ENCODE measurements at regions of chr15 and their contacts with region 1.

Region 1: GRCh38 chr15:84928843-84929168 is 44.3 kb downstream of the SLC28A1 start:
- DNase-seq: no peak
- ATAC-seq: no peak
- H3K4me3 ChIP-seq: no peak overlapping the region
- H3K4me3 Mint-ChIP-seq: no peak overlapping the region
- H3K27ac ChIP-seq: no peak overlapping the region
- H3K27ac Mint-ChIP-seq: no peak overlapping the region
- H3K4me1 ChIP-seq: no peaks in the 10 kb centered on the region
- H3K4me1 Mint-ChIP-seq: peaks cover 4 to 10% of the 10 kb centered on the region in 2 donors
- H3K27me3 ChIP-seq: no peaks in the 10 kb centered on the region
- H3K27me3 Mint-ChIP-seq: peaks cover 0 to 3% of the 10 kb centered on the region in 2 donors
- CTCF ChIP-seq: no peak

Region 2: DNA sequence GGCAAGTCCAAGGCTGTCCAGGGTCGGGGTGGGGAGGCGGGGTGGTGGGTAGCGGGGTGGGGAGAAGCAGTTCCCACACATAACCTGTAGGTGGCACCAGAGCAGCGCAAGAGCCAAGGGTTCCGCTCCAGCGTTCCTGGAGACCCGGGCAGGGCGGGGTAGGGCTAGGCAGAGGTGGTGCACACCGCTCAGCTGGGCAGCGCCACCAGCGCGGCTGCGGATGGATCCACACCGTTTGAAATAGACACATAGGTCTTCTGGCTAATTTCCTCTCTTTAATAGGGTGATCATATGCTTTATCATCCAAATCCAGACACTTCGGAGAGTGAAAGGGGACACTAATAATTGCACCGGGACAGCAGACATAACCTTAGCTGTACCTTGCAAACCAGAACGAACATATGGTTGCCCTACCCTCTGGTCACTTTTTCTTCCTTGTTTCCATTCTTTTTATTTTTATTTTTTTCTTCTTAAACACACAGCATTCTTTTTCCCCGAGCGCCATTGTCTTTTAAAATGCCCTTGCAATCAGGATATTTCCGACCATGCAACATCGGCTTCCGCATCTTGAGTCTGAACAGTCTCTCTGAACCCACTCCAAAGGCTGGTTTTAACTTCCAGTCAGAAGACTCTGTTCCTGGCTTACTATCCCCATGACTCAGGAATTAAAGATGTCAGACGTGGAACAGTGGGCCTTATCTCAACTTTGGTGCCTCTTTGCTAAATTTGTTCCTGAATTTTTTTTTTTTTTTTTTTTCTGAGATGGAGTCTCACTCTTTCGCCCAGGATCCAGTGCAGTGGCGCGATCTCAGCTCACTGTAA is 340.5 kb before region 1 on chr15:
- intact Hi-C with region 1: loop called (anchors 1 kb)
- DNase-seq: peak; percentile 71 to 92
- ATAC-seq: peak; percentile 100
- H3K4me3 ChIP-seq: no peak overlapping the region
- H3K4me3 Mint-ChIP-seq: peak overlapping the region; percentile 74
- H3K27ac ChIP-seq: no peak overlapping the region
- H3K27ac Mint-ChIP-seq: no peak overlapping the region
- H3K4me1 ChIP-seq: peaks cover 6% of the 10 kb centered on the region
- H3K4me1 Mint-ChIP-seq: peaks cover 0 to 12% of the 10 kb centered on the region in 2 donors
- H3K27me3 ChIP-seq: no peaks in the 10 kb centered on the region
- H3K27me3 Mint-ChIP-seq: peaks cover 0 to 11% of the 10 kb centered on the region in 2 donors
- CTCF ChIP-seq: peak; percentile 87

Region 3: DNA sequence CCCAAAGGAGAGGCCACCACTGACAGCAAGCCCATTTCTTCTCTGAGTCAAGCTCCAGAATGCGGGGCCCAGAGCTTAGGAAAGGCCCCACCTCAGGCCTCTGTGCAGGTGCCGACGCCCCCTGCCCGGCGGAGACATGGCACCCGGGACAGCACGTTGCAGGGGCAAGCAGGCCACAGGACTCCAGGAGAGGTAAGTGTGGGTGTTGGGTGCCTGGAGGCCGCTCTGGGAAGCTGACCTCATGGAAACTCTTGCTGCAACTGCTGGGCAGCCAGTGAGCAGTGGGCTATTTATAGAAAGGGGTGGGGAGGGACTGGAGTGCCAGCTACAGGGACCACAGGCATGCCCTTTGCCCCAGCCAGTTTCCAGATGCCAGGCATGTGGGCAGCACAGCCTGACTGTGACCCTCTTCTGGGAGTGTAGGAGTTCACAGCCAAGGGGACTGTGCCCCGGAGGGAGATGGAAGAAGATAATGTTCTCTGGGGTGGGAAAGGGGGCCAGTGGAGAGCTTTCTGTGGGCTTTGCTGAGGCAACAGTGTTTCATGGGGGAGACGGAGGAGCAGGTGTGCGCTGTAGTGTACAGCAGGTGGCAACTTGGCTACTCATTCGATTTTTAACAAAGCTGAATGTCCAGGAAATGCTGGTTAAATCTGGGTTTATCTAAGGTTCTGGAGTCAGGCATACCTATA is 87.9 kb before region 1 on chr15:
- intact Hi-C with region 1: loop called (anchors 1 kb)
- DNase-seq: no peak
- ATAC-seq: no peak
- H3K4me3 ChIP-seq: no peak overlapping the region
- H3K4me3 Mint-ChIP-seq: no peak overlapping the region
- H3K27ac ChIP-seq: no peak overlapping the region
- H3K27ac Mint-ChIP-seq: no peak overlapping the region
- H3K4me1 ChIP-seq: no peaks in the 10 kb centered on the region
- H3K4me1 Mint-ChIP-seq: peaks cover 0 to 3% of the 10 kb centered on the region in 2 donors
- H3K27me3 ChIP-seq: no peaks in the 10 kb centered on the region
- H3K27me3 Mint-ChIP-seq: no peaks in the 10 kb centered on the region
- CTCF ChIP-seq: no peak

Region 4: DNA sequence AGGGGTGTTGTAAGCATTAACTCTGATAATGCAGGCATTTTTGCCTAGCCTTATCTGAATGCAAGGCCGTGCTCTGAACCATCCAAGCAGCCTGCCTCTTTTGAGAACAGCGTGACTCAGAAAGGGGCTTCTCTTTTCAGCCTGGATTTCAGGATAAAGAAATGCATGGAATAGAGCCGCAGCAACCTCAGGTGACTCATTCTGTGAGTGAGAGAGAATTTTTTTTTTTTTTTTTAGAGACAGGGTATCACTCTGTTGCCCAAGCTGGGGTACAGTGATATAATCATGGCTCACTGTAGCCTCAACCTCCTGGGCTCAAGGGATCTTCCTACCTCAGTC is 32.3 kb after region 1 on chr15:
- intact Hi-C with region 1: no loop called
- DNase-seq: no peak
- ATAC-seq: no peak
- H3K4me3 ChIP-seq: no peak overlapping the region
- H3K4me3 Mint-ChIP-seq: no peak overlapping the region
- H3K27ac ChIP-seq: no peak overlapping the region
- H3K27ac Mint-ChIP-seq: no peak overlapping the region
- H3K4me1 ChIP-seq: no peaks in the 10 kb centered on the region
- H3K4me1 Mint-ChIP-seq: no peaks in the 10 kb centered on the region
- H3K27me3 ChIP-seq: no peaks in the 10 kb centered on the region
- H3K27me3 Mint-ChIP-seq: peaks cover 16 to 23% of the 10 kb centered on the region in 2 donors
- CTCF ChIP-seq: no peak

Measured in natural killer cell (primary cell).